ENCODE measurements at regions of chr12 and their contacts with region 1.

Region 1: GRCh38 chr12:15220994-15221885 is at the start of gene RERG:
- DNase-seq: peak; percentile 67 to 92
- H3K4me3 ChIP-seq: peak within 1 kb of the TSS; percentile 46 to 60 (median 52)
- H3K27ac ChIP-seq: no peak within 1 kb of the TSS
- H3K4me1 ChIP-seq: peaks cover 0 to 3% (median 3%) of the 10 kb centered on the region in 4 experiments; a peak in 4 of 7 replicates
- H3K27me3 ChIP-seq: peaks cover 0 to 9% (median 6%) of the 10 kb centered on the region in 4 experiments; a peak in 6 of 7 replicates
- CTCF ChIP-seq: peak; percentile 89 to 99 (median 93)
- EP300 ChIP-seq: no peak
- POLR2A ChIP-seq: no peak
- RAD21 ChIP-seq: peak; percentile 91 to 95
- total RNA-seq, gene RERG: 0.55 and 0.86 TPM in 2 replicates

Region 2: GRCh38 chr12:14810953-14811483 is 410.2 kb before region 1 on chr12:
- CTCF ChIA-PET with region 1: interaction called, 12 read pairs
- POLR2A ChIA-PET with region 1: no interaction called
- DNase-seq: no peak
- H3K4me3 ChIP-seq: no peak overlapping the region
- H3K27ac ChIP-seq: no peak overlapping the region
- H3K4me1 ChIP-seq: no peaks in the 10 kb centered on the region
- H3K27me3 ChIP-seq: no peaks in the 10 kb centered on the region
- CTCF ChIP-seq: peak; percentile 21 to 63 (median 62)
- EP300 ChIP-seq: no peak
- POLR2A ChIP-seq: no peak
- RAD21 ChIP-seq: peak; percentile 70 to 81

Region 3: GRCh38 chr12:15011162-15011561 is 210.1 kb before region 1 on chr12:
- CTCF ChIA-PET with region 1: interaction called, 14 read pairs
- POLR2A ChIA-PET with region 1: no interaction called
- DNase-seq: no peak
- H3K4me3 ChIP-seq: no peak overlapping the region
- H3K27ac ChIP-seq: no peak overlapping the region
- H3K4me1 ChIP-seq: no peaks in the 10 kb centered on the region
- H3K27me3 ChIP-seq: no peaks in the 10 kb centered on the region
- CTCF ChIP-seq: peak in 2 of 3 experiments; percentile 25 to 37; a peak in 2 of 4 replicates
- EP300 ChIP-seq: no peak
- POLR2A ChIP-seq: no peak
- RAD21 ChIP-seq: peak; percentile 29 to 32; a peak in 3 of 4 replicates

Region 4: GRCh38 chr12:15181017-15181683 is 40.1 kb before region 1 on chr12:
- CTCF ChIA-PET with region 1: interaction called, 41 read pairs
- POLR2A ChIA-PET with region 1: interaction called, 3 read pairs
- DNase-seq: no peak
- H3K4me3 ChIP-seq: no peak overlapping the region
- H3K27ac ChIP-seq: no peak overlapping the region
- H3K4me1 ChIP-seq: no peaks in the 10 kb centered on the region
- H3K27me3 ChIP-seq: no peaks in the 10 kb centered on the region
- CTCF ChIP-seq: no peak
- EP300 ChIP-seq: no peak
- POLR2A ChIP-seq: no peak
- RAD21 ChIP-seq: no peak

Region 5: DNA sequence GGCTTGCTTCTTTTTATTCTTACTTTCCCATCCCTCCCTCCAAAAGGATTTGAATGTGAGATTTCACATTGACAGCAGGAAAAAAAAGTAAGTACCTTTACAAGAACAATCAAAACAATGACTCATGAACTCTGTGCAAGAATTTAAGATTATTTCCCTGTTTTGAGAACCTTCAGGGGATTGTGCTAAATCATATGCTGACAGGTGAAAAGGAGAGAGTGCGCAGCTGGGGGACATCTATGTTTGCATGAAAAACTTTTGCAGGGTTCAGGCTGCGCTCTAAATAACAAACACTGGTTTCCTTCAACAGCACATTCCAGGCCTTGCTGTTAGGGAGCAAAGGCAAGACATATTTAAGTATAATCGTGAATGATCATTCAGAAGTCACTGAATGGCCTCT is 27.3 kb before region 1 on chr12:
- CTCF ChIA-PET with region 1: interaction called, 20 read pairs
- POLR2A ChIA-PET with region 1: no interaction called
- DNase-seq: no peak
- H3K4me3 ChIP-seq: no peak overlapping the region
- H3K27ac ChIP-seq: no peak overlapping the region
- H3K4me1 ChIP-seq: no peaks in the 10 kb centered on the region
- H3K27me3 ChIP-seq: no peaks in the 10 kb centered on the region
- CTCF ChIP-seq: no peak
- EP300 ChIP-seq: no peak
- POLR2A ChIP-seq: no peak
- RAD21 ChIP-seq: no peak

Region 6: GRCh38 chr12:15243111-15243885 is 22.1 kb after region 1 on chr12:
- CTCF ChIA-PET with region 1: interaction called, 13 read pairs
- POLR2A ChIA-PET with region 1: no interaction called
- DNase-seq: no peak
- H3K4me3 ChIP-seq: no peak overlapping the region
- H3K27ac ChIP-seq: no peak overlapping the region
- H3K4me1 ChIP-seq: no peaks in the 10 kb centered on the region
- H3K27me3 ChIP-seq: no peaks in the 10 kb centered on the region
- CTCF ChIP-seq: no peak
- EP300 ChIP-seq: no peak
- POLR2A ChIP-seq: no peak
- RAD21 ChIP-seq: no peak

Region 7: DNA sequence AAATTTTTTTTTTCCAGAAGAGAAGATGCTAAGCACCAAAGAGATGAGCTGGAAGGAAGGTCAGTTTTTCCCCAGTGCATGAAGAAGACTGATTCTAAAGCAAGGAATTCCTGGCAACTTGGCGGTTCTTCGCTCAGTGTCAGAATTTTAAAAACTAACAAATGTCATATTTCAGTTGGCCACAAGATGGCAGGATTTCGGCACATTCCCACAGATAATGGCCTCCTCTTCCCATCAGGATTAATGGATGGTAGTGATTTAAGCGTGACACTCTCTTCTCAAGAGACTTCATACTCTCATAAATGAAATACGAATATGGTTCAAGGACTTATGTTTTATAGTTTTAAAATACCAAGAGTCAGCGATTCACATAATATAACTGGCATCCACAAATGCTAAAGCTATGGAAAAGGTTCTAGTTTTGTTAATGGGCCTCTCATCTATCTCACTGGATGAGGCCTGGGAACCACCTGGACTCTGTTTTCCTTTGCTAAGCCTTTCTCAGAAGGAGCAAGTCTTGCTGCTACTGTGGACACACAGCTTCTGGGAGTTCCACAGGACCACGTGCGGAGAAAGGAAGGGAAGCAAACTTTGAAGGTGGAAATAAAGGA is 55.0 kb after region 1 on chr12:
- CTCF ChIA-PET with region 1: interaction called, 11 read pairs
- POLR2A ChIA-PET with region 1: no interaction called
- DNase-seq: no peak
- H3K4me3 ChIP-seq: no peak overlapping the region
- H3K27ac ChIP-seq: no peak overlapping the region
- H3K4me1 ChIP-seq: no peaks in the 10 kb centered on the region
- H3K27me3 ChIP-seq: no peaks in the 10 kb centered on the region
- CTCF ChIP-seq: peak in 2 of 3 experiments; percentile 67 to 71; a peak in 3 of 4 replicates
- EP300 ChIP-seq: no peak
- POLR2A ChIP-seq: no peak
- RAD21 ChIP-seq: peak; percentile 81 to 84